Heart right ventricle (tissue), 16 donors: ENCODE measurements at regions of chr2 and their contacts with region 1.

Region 1: GRCh38 chr2:240434728-240435456 is 571 bp upstream of the GPC1 start:
- DNase-seq: peak; percentile 93 to 95
- ATAC-seq: peak; percentile 64 to 87 (median 81)
- H3K4me3 ChIP-seq: peak overlapping the region; percentile 16 to 84 (median 68)
- H3K27ac ChIP-seq: peak overlapping the region; percentile 69 to 97 (median 93)
- H3K4me1 ChIP-seq: peaks cover 9 to 45% (median 34%) of the 10 kb centered on the region in 9 donors
- H3K27me3 ChIP-seq: peaks cover 0 to 53% (median 27%) of the 10 kb centered on the region in 7 donors
- CTCF ChIP-seq: no peak

Region 2: DNA sequence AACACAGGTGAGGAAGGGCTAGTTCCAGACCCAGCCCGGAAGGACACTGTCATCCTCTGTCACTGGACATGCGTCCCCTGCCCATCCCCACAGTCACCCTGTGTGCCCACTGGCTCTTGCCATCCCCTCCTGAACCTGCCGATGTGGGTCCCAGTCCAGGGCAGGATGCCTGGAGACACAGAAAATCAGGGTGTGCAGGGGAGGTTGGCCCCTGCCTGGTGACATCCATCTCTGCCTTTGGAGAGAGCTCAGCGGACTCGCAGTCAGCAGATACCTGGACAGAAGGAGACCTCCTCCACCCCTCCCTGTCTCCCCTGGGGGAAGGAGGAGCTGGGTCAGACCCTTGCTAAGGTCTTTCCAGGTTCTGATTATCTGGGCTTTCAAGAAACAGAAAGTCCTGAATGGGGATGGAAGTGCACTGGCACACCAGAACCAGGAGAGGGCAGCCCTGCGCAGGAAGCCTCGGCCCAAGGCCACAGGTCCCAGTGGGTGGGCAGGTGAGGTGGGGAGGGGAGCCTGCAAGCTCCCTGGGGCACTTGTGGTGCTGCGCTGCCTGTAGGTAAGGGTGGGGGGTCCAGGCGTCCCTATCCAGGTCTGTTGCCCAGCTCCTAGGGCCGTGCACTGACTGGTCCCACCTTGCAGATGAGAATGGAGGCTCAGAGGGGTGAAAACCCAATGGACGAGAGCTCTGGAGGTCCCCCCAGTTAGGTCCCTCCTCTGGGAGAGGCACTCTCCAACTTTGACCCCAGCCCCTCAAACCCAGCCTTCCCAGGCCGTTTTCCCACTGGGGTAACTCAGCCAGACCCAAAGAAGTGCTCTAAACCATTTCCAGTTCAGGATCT is 284.7 kb before region 1 on chr2:
- intact Hi-C with region 1: loop called in 3 of 10 experiments (anchors 5 kb)
- DNase-seq: no peak
- ATAC-seq: peak in 6 of 8 donors; percentile 45 to 60 (median 52)
- H3K4me3 ChIP-seq: no peak overlapping the region
- H3K27ac ChIP-seq: no peak overlapping the region
- H3K4me1 ChIP-seq: peaks cover 0 to 9% (median 0%) of the 10 kb centered on the region in 9 donors
- H3K27me3 ChIP-seq: peaks cover 0 to 56% (median 12%) of the 10 kb centered on the region in 7 donors
- CTCF ChIP-seq: peak; percentile 31 to 71 (median 65)

Region 3: DNA sequence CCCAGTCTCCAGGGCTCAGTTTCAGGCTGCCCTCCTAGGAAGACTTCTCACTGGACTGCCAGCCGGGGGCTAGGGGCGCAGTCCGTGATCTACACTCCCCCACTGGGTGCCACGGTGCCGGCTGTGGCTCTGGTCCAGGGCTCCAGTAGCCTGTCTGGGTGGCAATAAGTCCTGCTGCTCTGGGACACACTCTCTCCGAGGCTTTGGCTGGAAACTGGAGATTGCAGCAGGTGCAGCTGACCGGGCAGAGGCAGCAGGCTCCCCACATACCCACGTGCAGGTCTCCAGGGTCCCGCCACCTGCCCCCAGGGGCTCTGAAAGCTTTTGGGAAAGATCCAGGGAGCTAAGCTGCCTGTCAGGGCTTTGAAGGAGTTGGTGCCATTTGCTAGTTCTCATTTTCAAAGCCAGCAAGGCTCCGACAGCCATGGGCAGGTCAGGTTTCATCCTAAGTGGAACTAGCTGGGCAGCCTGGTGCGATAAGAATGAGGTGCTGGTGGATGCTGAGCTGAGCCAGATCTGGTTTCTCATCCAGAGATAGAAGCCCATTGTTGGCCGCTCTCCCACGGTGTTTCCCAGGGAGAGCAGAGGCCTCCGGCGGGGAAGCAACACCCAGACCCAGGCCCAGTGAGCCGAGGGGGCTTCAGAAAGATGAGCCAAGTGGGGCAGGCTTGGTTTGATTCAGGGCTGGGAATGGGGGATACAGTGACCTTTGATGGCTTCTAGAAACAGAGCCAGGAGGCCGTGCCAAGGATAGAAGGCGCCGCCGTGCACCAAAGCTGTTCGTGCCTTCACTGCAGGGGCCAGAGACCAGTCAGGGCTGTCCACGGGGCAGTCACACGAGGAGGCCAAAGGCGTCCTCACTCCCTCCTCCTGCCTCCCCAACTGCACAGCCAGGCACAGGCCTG is 141.1 kb before region 1 on chr2:
- intact Hi-C with region 1: loop called in 6 of 10 experiments (anchors 2 to 10 kb)
- DNase-seq: peak; percentile 56 to 62
- ATAC-seq: peak; percentile 39 to 79 (median 52)
- H3K4me3 ChIP-seq: no peak overlapping the region
- H3K27ac ChIP-seq: peak overlapping the region in 9 of 10 donors; percentile 40 to 85 (median 74)
- H3K4me1 ChIP-seq: peaks cover 3 to 55% (median 18%) of the 10 kb centered on the region in 9 donors
- H3K27me3 ChIP-seq: no peaks in the 10 kb centered on the region
- CTCF ChIP-seq: no peak

Region 4: DNA sequence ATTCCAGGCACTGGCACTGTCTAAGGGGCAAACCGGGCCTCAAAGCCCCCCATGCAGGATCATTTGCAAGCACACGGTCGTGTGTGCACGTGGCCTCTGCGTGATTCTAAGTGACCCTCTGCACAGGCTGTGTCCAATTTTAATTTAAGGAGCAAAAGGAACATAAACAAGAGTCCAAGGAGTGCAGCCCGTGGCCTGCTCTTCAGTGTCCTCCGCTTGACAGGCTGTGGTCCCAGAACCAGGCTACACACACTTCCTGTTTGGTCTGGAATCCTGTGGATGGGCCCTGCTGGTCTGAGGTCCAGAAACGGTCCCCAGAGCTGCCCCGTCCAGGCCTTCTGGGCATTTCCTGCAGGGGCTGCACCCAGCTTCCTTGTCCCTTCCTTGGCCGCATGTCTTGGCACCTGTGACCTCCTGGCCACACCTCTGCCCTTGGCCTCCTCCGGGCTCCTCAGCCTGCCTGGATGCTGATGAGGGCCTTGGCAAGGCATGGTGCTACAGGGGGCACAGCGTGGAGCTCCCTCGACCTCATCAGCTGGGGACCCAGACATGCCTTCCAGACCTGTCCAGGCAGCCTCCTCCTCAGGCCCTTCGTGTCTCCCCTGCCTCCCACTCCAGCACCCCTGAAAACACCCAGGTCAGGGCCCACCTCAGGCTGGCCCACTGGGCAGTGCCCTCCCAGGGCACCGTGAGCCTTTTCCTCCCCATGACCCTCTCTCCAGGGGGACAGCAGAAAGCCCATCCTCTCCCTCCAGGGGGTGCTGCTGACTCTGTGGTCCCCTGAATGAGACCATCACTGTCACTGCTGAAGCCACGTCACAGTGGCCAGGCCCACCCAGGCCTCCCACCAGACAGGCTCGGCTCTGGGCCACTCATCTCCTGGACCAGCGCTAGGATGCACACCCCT is 135.8 kb before region 1 on chr2:
- intact Hi-C with region 1: loop called in 5 of 10 experiments (anchors 2 to 10 kb)
- DNase-seq: no peak
- ATAC-seq: peak in 1 of 8 donors; percentile 2
- H3K4me3 ChIP-seq: no peak overlapping the region
- H3K27ac ChIP-seq: no peak overlapping the region
- H3K4me1 ChIP-seq: peaks cover 0 to 36% (median 9%) of the 10 kb centered on the region in 9 donors
- H3K27me3 ChIP-seq: no peaks in the 10 kb centered on the region
- CTCF ChIP-seq: no peak

Region 5: DNA sequence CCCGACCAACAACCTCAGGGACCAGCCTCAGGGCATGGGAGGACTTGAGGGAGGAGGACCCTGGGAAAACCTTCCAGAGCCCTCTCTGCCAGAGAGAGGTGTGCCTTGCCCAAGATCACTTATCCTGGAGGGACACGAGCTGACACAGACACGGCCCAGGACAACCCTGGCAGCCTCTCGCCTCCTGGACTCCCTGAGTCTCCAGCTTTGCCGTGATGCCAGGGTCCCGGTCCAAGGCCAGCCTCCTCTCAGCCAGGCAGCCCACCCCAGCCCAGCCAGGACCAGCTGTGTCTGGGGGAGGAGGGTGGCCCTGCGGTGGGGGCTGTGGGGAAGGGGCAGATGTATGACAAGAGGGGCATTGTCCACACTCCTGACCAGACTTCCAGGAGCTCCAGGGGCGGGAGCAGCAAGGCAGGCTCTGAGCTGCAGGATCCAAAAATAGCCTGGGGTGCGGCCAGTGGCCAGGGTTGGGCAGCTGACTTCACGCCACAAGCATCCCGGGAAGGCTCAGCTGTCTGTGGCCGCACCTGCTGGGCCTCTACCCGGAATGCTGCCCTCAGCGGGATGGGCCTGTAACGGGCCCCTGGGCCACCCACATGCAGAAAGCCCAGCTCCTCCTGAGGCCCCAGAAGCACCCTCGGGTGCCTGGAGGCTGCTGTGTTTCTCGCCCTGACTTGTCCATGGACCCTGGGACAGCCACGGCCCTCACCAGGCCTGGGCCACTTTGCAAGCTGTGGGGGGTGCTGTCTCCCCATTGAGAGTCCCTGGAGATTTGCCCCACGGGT is 64.9 kb before region 1 on chr2:
- intact Hi-C with region 1: loop called in 6 of 10 experiments (anchors 2 to 5 kb)
- DNase-seq: peak; percentile 72 to 83
- ATAC-seq: peak; percentile 79 to 89 (median 84)
- H3K4me3 ChIP-seq: no peak overlapping the region
- H3K27ac ChIP-seq: peak overlapping the region; percentile 71 to 97 (median 92)
- H3K4me1 ChIP-seq: peaks cover 19 to 78% (median 41%) of the 10 kb centered on the region in 9 donors
- H3K27me3 ChIP-seq: no peaks in the 10 kb centered on the region
- CTCF ChIP-seq: no peak

Region 6: DNA sequence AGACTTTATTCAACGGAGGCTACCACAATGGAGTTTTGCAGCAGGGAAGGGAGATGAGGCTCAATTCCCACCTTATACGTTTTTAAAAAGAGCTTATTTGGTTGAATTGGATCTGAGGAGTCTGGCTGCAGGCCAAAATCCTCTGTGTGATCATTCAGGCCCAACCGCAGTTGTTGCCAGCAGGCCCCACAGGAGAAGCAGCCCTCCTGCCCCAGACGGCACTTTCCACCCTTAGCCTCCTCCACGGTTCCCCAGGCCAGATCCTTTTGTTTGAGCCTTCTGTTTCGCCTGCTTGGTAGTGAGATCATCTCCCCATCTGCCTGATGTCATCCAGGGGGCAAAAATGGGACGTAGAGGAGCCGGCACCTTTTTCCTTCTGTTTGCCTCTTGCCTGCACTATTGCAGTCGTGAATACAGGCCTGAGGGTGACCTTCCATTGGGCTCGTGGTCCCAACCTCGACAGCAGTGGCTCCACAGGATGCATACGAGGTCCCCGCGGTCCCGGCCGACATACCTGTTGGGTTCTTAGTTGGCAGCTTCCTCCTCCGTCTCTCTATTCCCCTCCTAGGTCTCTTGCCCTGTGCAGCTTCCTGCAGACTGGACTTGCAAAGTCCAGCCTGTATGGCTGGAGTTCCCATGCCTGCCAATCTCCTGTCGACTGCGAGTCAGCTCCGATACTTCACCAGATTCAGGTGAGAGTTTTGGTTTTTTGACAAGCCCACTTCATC is 181.1 kb after region 1 on chr2:
- intact Hi-C with region 1: no loop called
- DNase-seq: no peak
- ATAC-seq: no peak
- H3K4me3 ChIP-seq: no peak overlapping the region
- H3K27ac ChIP-seq: no peak overlapping the region
- H3K4me1 ChIP-seq: peaks cover 0 to 36% (median 0%) of the 10 kb centered on the region in 9 donors
- H3K27me3 ChIP-seq: no peaks in the 10 kb centered on the region
- CTCF ChIP-seq: no peak